ENCODE measurements at regions of chr15 and their contacts with region 1.

Region 1: DNA sequence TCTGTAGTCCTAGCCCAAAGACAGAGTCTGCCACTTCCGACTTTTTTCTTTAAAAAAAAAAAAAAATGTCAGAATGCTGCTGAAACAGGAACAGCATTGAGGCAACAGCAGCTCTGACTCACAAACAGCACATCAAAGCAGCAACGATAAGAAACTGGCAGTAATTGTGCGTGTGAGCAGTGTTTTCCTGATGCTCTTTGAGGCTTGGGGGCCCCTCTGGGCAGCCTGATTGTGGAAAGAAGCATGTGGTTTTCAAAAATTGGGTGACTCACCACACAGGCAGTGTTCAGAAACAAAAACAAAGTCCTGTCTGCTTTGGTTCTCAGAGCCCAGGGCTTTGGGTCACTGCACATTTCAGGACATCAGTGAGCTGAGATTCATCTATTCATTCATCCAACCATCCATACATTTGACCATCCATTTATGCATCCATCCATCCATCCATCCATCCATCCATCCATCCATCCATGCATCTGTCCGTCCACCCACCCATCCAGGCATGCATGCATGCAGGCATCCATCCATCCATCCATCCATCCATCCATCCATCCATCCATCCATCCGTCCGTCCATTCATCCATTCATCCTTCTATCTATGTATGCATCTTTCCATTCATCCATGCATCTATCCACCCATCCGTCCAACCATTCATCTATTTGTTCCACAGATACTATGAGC is 308.4 kb downstream of the RPLP1 start:
- DNase-seq: peak; percentile 34 to 88 (median 81)
- ATAC-seq: peak; percentile 84
- H3K4me3 ChIP-seq: peak overlapping the region; percentile 34
- H3K4me3 Mint-ChIP-seq: peak overlapping the region; percentile 51 to 86 (median 67)
- H3K27ac ChIP-seq: no peak overlapping the region
- H3K27ac Mint-ChIP-seq: peak overlapping the region; percentile 48 to 95 (median 88)
- H3K4me1 ChIP-seq: peaks cover 57 to 61% of the 10 kb centered on the region in 2 donors
- H3K4me1 Mint-ChIP-seq: peaks cover 52 to 79% (median 70%) of the 10 kb centered on the region in 7 donors
- H3K27me3 ChIP-seq: no peaks in the 10 kb centered on the region
- H3K27me3 Mint-ChIP-seq: peaks cover 0 to 25% (median 7%) of the 10 kb centered on the region in 5 donors

Region 2: DNA sequence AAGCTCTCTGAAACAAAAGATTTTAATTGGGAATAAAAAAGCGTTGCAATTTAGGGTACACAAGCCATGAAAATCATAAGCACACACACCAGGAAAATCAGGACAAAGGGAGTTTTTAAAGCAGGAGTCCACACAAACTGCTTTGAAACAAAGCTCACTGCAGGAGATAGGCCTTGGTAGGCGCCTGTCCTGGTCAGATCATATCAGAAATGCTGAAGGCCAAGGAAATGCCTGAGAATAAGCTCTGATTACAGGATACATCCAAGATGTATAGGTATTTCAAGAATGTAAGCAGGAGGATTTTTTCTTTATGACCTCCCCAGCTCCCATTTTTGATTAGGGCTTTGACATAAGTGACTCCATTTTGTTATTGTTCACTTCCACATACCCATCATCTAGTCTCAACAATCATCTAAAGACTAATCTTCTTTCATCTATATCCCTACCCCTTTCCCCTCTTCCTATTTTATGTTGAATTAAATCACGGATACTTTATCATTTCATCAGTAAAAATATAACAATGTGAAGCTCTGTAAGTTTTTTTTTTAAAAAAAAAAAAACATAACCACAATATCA is 812.0 kb before region 1 on chr15:
- CTCF ChIA-PET with region 1: no interaction called
- POLR2A ChIA-PET with region 1: no interaction called
- intact Hi-C with region 1: no loop called
- DNase-seq: no peak
- ATAC-seq: no peak
- H3K4me3 ChIP-seq: no peak overlapping the region
- H3K4me3 Mint-ChIP-seq: no peak overlapping the region
- H3K27ac ChIP-seq: no peak overlapping the region
- H3K27ac Mint-ChIP-seq: no peak overlapping the region
- H3K4me1 ChIP-seq: no peaks in the 10 kb centered on the region
- H3K4me1 Mint-ChIP-seq: no peaks in the 10 kb centered on the region
- H3K27me3 ChIP-seq: no peaks in the 10 kb centered on the region
- H3K27me3 Mint-ChIP-seq: peaks cover 19 to 38% (median 25%) of the 10 kb centered on the region in 5 donors

Region 3: GRCh38 chr15:69576035-69576526 is 184.9 kb before region 1 on chr15:
- CTCF ChIA-PET with region 1: no interaction called
- POLR2A ChIA-PET with region 1: no interaction called
- intact Hi-C with region 1: loop called in 1 of 2 experiments (anchors 1 kb)
- DNase-seq: peak; percentile 38 to 69 (median 58)
- ATAC-seq: peak; percentile 87
- H3K4me3 ChIP-seq: no peak overlapping the region
- H3K4me3 Mint-ChIP-seq: no peak overlapping the region
- H3K27ac ChIP-seq: no peak overlapping the region
- H3K27ac Mint-ChIP-seq: peak overlapping the region in 3 of 9 donors; percentile 23 to 38 (median 24)
- H3K4me1 ChIP-seq: peaks cover 7 to 9% of the 10 kb centered on the region in 2 donors
- H3K4me1 Mint-ChIP-seq: peaks cover 14 to 44% (median 30%) of the 10 kb centered on the region in 7 donors
- H3K27me3 ChIP-seq: no peaks in the 10 kb centered on the region
- H3K27me3 Mint-ChIP-seq: peaks cover 0 to 11% (median 0%) of the 10 kb centered on the region in 5 donors

Region 4: GRCh38 chr15:69719527-69720240 is 41.3 kb before region 1 on chr15:
- CTCF ChIA-PET with region 1: interaction called, 5 read pairs
- POLR2A ChIA-PET with region 1: interaction called, 10 read pairs
- intact Hi-C with region 1: loop called (anchors 1 kb)
- DNase-seq: peak in 7 of 9 donors; percentile 26 to 49 (median 42)
- ATAC-seq: peak; percentile 87
- H3K4me3 ChIP-seq: no peak overlapping the region
- H3K4me3 Mint-ChIP-seq: peak overlapping the region in 9 of 10 donors; percentile 25 to 80 (median 46)
- H3K27ac ChIP-seq: no peak overlapping the region
- H3K27ac Mint-ChIP-seq: peak overlapping the region in 8 of 9 donors; percentile 14 to 96 (median 63)
- H3K4me1 ChIP-seq: peaks cover 62 to 76% of the 10 kb centered on the region in 2 donors
- H3K4me1 Mint-ChIP-seq: peaks cover 63 to 95% (median 88%) of the 10 kb centered on the region in 7 donors
- H3K27me3 ChIP-seq: no peaks in the 10 kb centered on the region
- H3K27me3 Mint-ChIP-seq: peaks cover 0 to 46% (median 0%) of the 10 kb centered on the region in 5 donors

Region 5: DNA sequence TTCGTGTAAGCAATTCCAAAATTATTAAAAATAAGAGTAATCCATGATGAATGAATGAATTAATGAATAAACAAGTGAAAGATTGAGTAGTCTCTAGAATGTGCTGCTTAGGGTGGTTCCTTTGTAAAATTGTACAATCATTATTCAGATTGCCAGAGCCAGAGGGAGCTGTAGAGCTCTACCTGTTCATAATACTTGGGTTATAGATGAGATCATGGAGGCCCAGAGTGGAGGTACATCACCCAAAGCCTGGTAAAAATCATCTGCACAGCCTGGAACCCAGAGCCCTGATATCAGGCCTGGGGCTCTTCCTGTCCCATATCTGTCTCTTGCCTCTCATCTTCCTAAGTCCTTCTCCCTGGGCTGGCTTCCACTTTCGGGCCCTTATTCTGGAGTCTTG is 11.2 kb before region 1 on chr15:
- CTCF ChIA-PET with region 1: interaction called, 6 read pairs
- POLR2A ChIA-PET with region 1: interaction called, 7 read pairs
- intact Hi-C with region 1: loop called in 1 of 2 experiments (anchors 1 kb)
- DNase-seq: peak in 1 of 9 donors; percentile 22
- ATAC-seq: peak; percentile 54
- H3K4me3 ChIP-seq: no peak overlapping the region
- H3K4me3 Mint-ChIP-seq: no peak overlapping the region
- H3K27ac ChIP-seq: no peak overlapping the region
- H3K27ac Mint-ChIP-seq: no peak overlapping the region
- H3K4me1 ChIP-seq: peaks cover 14% of the 10 kb centered on the region in 2 donors
- H3K4me1 Mint-ChIP-seq: peaks cover 38 to 71% (median 50%) of the 10 kb centered on the region in 7 donors
- H3K27me3 ChIP-seq: no peaks in the 10 kb centered on the region
- H3K27me3 Mint-ChIP-seq: peaks cover 0 to 23% (median 9%) of the 10 kb centered on the region in 5 donors

Region 6: DNA sequence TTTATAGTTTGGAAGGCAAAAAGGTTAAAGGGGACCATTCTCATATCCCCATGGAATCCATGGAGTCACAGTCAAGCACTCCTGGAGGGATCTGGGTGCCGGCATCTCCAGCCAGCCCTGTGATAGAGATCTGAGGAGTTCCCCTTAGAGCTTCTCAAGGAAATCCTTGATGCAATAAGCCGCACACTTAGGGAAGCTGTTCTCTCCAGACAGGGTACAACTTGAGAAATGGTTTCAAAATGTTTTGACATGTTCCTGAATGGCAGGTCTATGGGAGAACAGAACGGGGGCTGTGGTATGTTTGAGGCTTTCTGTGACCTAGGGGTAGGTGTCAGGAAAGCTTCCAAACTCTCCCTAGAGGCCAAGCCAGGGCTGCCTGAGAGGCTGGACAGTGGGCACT is 43.8 kb after region 1 on chr15:
- CTCF ChIA-PET with region 1: no interaction called
- POLR2A ChIA-PET with region 1: no interaction called
- intact Hi-C with region 1: loop called in 1 of 2 experiments (anchors 5 kb)
- DNase-seq: no peak
- ATAC-seq: peak; percentile 63
- H3K4me3 ChIP-seq: no peak overlapping the region
- H3K4me3 Mint-ChIP-seq: no peak overlapping the region
- H3K27ac ChIP-seq: no peak overlapping the region
- H3K27ac Mint-ChIP-seq: no peak overlapping the region
- H3K4me1 ChIP-seq: no peaks in the 10 kb centered on the region
- H3K4me1 Mint-ChIP-seq: peaks cover 0 to 10% (median 5%) of the 10 kb centered on the region in 7 donors
- H3K27me3 ChIP-seq: no peaks in the 10 kb centered on the region
- H3K27me3 Mint-ChIP-seq: peaks cover 0 to 20% (median 14%) of the 10 kb centered on the region in 5 donors

Region 7: GRCh38 chr15:70437882-70438331 is 676.9 kb after region 1 on chr15:
- CTCF ChIA-PET with region 1: no interaction called
- POLR2A ChIA-PET with region 1: no interaction called
- intact Hi-C with region 1: no loop called
- DNase-seq: no peak
- ATAC-seq: no peak
- H3K4me3 ChIP-seq: no peak overlapping the region
- H3K4me3 Mint-ChIP-seq: no peak overlapping the region
- H3K27ac ChIP-seq: no peak overlapping the region
- H3K27ac Mint-ChIP-seq: no peak overlapping the region
- H3K4me1 ChIP-seq: peaks cover 0 to 25% of the 10 kb centered on the region in 2 donors
- H3K4me1 Mint-ChIP-seq: peaks cover 29 to 48% (median 36%) of the 10 kb centered on the region in 7 donors
- H3K27me3 ChIP-seq: no peaks in the 10 kb centered on the region
- H3K27me3 Mint-ChIP-seq: peaks cover 7 to 28% (median 14%) of the 10 kb centered on the region in 5 donors

Measured in naive thymus-derived CD4-positive, alpha-beta T cell (primary cell).